Activated CD4-positive, alpha-beta T cell treated with anti-CD3 and anti-CD28 coated beads for 36 hours (primary cell): ENCODE measurements at regions of chr2 and their contacts with region 1.

Region 1: GRCh38 chr2:26745609-26746327 is 18.3 kb upstream of the SLC35F6 start:
- DNase-seq: peak; percentile 91
- ATAC-seq: peak; percentile 93
- H3K4me3 Mint-ChIP-seq: no peak overlapping the region
- H3K27ac Mint-ChIP-seq: no peak overlapping the region
- H3K4me1 Mint-ChIP-seq: peaks cover 3% of the 10 kb centered on the region
- H3K27me3 Mint-ChIP-seq: no peaks in the 10 kb centered on the region

Region 2: DNA sequence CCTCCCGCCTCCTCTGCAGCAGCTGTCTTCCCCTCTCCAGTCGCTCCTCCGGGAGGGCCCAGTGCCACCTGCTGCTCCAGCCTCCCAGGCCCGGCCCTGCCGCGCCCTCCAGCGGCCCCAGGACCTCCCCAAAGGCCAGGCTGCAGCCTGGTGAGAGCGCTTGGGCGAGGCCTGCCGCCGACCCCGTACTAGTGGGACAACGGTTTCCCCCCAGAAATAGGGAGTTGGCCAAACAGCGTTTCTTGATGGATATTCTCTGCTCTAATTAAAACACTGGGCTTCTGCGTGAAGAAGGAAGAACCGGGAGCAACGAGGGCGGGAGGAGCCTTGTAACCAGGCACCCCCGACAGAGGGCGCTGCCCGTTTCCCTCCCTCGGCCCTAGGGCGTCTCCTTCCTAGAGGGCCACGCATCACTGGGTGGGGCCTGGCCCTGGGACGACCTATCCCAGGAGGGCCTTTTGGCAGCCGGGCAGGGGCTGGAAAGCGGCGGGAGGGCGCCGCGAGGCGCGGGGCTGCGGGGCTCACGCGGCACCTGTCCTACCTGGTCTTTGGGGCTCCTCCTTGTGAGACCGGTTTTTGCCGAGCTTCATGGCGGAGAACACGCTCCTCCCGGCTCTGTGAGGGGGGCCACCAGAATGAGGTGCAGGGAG is 242.4 kb before region 1 on chr2:
- CTCF ChIA-PET with region 1: interaction called, 4 read pairs
- POLR2A ChIA-PET with region 1: no interaction called
- intact Hi-C with region 1: loop called in 1 of 2 experiments (anchors 1 kb)
- DNase-seq: peak; percentile 94
- ATAC-seq: peak; percentile 100
- H3K4me3 Mint-ChIP-seq: peak overlapping the region; percentile 65
- H3K27ac Mint-ChIP-seq: peak overlapping the region; percentile 63
- H3K4me1 Mint-ChIP-seq: peaks cover 3% of the 10 kb centered on the region
- H3K27me3 Mint-ChIP-seq: peaks cover 1% of the 10 kb centered on the region

Region 3: DNA sequence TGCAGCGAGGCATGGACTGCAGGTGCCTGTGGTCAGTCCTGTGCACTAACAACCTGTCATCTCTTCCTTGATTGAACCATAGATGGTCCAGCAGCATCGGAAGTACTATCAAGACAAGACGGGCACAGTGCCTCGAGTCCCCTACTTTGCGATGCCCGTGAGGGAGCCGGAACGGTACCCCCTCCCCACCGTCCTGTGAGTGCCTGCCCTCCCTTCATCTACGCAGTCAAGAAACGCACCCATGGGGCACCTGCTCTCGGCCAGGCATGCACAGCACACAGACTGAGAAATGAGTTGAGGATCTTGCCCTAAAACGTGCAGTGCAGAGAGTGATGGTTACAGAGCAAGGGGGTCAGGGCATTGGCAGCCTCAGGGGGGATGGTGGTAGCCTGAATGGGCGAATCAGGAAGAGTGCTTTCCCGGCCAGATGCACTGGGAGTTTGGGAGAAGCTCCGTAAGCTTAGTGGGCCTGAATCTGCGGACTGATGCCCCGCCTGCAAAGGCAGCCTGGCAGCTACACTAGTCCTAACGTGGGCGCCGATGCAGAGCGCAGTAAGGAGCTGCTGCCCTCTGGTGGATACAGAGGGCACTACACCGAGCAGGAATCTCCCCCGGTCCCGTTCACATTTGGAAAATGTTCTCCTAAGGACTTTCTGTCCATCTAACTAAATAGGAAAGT is 168.2 kb before region 1 on chr2:
- CTCF ChIA-PET with region 1: interaction called, 10 read pairs
- POLR2A ChIA-PET with region 1: no interaction called
- intact Hi-C with region 1: no loop called
- DNase-seq: peak; percentile 82
- ATAC-seq: peak; percentile 92
- H3K4me3 Mint-ChIP-seq: no peak overlapping the region
- H3K27ac Mint-ChIP-seq: no peak overlapping the region
- H3K4me1 Mint-ChIP-seq: no peaks in the 10 kb centered on the region
- H3K27me3 Mint-ChIP-seq: peaks cover 2% of the 10 kb centered on the region

Region 4: DNA sequence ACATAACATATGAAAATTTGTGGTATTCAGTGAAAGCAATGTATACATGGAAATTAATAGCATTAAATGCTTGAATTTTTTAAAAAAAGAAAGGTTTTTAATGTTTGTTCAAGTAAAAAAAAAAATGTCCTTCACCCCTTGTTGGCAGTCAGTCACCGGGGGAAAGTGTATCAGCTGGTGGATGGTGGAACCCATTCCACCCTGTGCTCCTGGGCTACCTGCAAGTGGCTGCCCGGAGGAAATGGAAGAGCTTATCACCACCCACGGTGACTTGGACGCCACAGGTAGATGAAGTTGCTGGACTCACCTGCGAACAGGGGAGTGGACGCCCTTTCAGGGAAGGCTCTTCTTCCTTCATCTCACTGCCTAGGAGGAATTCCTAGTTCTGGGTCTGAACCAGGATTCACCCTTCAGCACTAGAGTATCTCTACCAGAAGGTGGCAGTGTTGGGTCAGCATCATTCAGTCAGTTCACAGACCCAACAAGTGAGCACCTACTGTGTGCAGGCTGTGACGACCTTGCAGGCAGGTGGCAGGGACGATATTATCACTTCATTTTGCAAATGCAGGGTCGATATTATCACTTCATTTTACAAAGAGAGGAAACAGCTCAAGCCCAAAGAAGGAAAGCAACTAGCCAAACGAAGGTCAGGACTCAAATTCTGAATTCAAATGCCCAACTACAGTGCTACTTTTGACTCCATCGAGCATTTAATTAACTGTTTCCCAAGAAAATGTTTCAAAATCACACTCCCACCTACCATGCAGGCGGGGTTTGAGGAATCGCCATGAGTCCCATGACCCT is 140.4 kb before region 1 on chr2:
- CTCF ChIA-PET with region 1: interaction called, 114 read pairs
- POLR2A ChIA-PET with region 1: no interaction called
- intact Hi-C with region 1: loop called (anchors 1 kb)
- DNase-seq: peak; percentile 56
- ATAC-seq: peak; percentile 61
- H3K4me3 Mint-ChIP-seq: no peak overlapping the region
- H3K27ac Mint-ChIP-seq: no peak overlapping the region
- H3K4me1 Mint-ChIP-seq: peaks cover 18% of the 10 kb centered on the region
- H3K27me3 Mint-ChIP-seq: peaks cover 11% of the 10 kb centered on the region

Region 5: DNA sequence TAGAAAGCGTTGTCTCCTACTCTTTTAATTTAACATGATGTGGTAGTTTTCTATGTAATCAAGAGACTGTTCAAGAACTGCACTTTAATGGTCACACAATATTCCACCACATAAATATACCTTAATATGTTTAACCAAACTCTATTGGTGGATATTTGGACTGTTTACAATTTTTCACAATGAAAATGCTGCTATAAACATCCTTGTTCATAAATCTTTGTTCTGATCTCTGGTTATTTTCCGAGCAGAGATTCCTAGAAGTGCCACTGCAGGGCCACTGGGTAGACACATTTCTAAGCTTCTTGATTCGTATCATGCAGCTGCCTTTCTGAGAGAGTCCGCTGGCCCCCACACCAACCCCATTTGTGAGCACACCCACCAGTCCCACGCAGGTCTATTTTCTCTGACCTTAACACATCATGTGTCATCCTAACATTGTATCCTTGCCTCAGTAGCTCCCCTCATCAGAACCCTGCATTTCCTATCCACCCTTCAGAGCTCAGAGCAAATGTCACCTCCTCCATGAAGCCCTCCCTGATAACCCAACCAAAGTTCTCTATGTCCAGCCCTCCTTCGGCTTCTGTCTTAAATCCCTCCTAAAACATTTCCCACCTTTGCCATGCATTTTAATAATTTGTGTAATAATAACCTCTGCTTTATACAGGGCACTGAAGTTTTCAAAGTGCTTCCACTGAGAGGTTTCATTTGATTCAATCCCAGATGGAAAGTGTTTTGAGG is 26.6 kb before region 1 on chr2:
- CTCF ChIA-PET with region 1: no interaction called
- POLR2A ChIA-PET with region 1: no interaction called
- intact Hi-C with region 1: no loop called
- DNase-seq: no peak
- ATAC-seq: no peak
- H3K4me3 Mint-ChIP-seq: no peak overlapping the region
- H3K27ac Mint-ChIP-seq: no peak overlapping the region
- H3K4me1 Mint-ChIP-seq: no peaks in the 10 kb centered on the region
- H3K27me3 Mint-ChIP-seq: no peaks in the 10 kb centered on the region

Region 6: DNA sequence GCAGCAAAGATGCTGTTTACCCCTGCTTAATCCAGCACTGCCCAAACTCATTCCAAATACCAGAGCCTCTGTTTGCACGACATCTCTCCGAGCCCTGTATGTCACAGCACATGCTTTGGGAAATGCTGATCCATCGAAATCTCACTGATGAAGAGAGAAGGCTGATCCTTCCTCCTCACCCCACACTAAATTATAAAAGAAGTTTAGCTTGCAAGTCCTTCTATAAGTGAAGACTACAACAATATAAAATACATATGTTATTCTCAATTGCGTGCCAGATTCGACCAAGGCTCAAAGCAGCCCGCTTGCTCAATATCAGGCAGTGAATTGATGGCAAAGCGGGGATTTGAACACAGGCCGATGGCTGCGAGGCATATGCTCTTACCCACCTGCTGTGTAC is 12.4 kb before region 1 on chr2:
- CTCF ChIA-PET with region 1: interaction called, 11 read pairs
- POLR2A ChIA-PET with region 1: no interaction called
- intact Hi-C with region 1: no loop called
- DNase-seq: no peak
- ATAC-seq: no peak
- H3K4me3 Mint-ChIP-seq: no peak overlapping the region
- H3K27ac Mint-ChIP-seq: no peak overlapping the region
- H3K4me1 Mint-ChIP-seq: no peaks in the 10 kb centered on the region
- H3K27me3 Mint-ChIP-seq: peaks cover 3% of the 10 kb centered on the region